Heart right ventricle (tissue), 16 donors: ENCODE measurements at regions of chr7 and their contacts with region 1.

Region 1: DNA sequence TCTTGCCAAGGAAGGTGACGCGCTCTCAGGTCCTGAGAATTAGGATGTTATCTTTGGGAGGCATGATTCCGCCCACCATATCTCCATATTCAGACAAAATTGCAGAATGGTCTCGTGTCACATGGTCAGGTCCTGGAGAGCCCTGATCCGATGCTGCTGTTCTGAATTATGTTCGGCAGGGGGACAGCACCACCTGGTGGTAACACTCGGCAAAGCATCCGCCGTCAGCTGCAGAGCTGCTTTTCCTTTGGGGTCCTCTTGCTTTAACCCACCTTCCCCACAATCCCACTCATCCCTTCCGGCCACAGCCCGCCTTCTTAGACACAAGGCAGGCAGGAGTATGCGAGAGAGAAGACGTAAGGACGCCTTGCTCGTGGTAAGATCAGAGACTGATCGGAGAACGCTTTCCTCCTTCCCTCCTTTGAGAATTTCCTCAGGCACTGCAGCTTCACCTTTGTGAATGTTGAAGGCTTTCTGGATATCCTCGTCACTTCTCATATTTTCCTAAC is 327.8 kb upstream of the C7orf33 start:
- DNase-seq: peak; percentile 49 to 66
- ATAC-seq: peak; percentile 53 to 88 (median 79)
- H3K4me3 ChIP-seq: peak overlapping the region in 2 of 10 donors; percentile 11 to 12
- H3K27ac ChIP-seq: no peak overlapping the region
- H3K4me1 ChIP-seq: peaks cover 0 to 8% (median 4%) of the 10 kb centered on the region in 9 donors
- H3K27me3 ChIP-seq: peaks cover 0 to 33% (median 8%) of the 10 kb centered on the region in 7 donors
- CTCF ChIP-seq: peak; percentile 80 to 98 (median 92)

Region 2: DNA sequence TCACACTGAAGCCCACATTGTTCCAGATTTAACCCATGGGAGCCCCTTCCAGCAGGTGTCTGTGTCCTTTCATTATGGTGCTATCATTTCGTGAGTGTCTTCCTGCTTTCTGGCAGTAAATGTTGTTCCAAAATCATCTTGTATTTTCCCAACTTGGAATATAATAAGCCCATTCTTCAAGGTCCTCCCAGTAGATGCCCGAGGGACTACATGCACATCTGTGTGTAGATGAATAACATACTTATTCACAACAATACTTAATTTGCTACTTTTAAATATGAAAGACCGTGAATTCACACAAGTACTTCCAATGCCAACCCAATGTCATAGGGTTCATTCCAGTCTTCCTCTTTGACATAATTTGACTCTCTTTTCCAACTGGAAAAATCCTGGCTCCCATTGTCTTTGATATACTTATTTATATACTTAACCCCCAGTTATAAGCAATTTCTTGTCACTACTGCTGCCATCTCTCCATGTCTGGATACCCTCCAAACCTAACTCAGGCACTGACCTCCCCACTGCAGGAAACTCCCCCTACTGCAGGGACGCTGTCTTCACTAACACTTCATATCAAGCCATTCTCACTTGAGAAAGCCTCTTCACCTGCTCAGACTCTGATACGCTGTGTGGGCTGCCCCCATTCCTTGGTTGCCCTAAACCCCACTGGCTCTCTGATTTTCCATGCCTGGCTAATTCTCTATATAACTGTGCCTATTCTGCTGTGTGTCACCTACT is 1027.0 kb before region 1 on chr7:
- intact Hi-C with region 1: loop called in 3 of 10 experiments (anchors 10 kb)
- DNase-seq: no peak
- ATAC-seq: no peak
- H3K4me3 ChIP-seq: no peak overlapping the region
- H3K27ac ChIP-seq: no peak overlapping the region
- H3K4me1 ChIP-seq: no peaks in the 10 kb centered on the region
- H3K27me3 ChIP-seq: no peaks in the 10 kb centered on the region
- CTCF ChIP-seq: no peak

Region 3: DNA sequence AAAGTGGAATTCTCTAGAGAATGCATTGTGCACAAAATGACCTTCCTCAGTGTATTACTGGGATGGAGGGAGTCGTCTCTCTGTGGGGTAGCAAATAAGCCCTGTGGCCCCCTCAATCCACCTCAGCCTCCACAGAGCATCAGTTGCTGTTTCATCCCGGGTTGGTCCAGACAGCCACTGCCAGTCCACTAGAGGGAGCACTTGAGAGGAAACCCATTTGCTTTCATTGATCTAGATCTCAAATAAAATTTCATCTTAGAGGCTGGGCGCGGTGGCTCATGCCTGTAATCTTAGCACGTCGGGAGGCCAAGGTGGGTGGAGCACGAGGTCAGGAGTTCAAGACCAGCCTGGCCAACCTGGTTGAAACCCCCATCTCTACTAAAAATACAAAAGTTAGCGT is 1017.5 kb before region 1 on chr7:
- intact Hi-C with region 1: loop called in 4 of 10 experiments (anchors 5 to 10 kb)
- DNase-seq: peak in 1 of 2 donors; percentile 5
- ATAC-seq: no peak
- H3K4me3 ChIP-seq: no peak overlapping the region
- H3K27ac ChIP-seq: no peak overlapping the region
- H3K4me1 ChIP-seq: no peaks in the 10 kb centered on the region
- H3K27me3 ChIP-seq: peaks cover 0 to 4% (median 0%) of the 10 kb centered on the region in 7 donors
- CTCF ChIP-seq: peak in 8 of 9 donors; percentile 25 to 70 (median 62)

Region 4: GRCh38 chr7:148318102-148318811 is 55.5 kb after region 1 on chr7:
- intact Hi-C with region 1: no loop called
- DNase-seq: no peak
- ATAC-seq: no peak
- H3K4me3 ChIP-seq: no peak overlapping the region
- H3K27ac ChIP-seq: no peak overlapping the region
- H3K4me1 ChIP-seq: no peaks in the 10 kb centered on the region
- H3K27me3 ChIP-seq: no peaks in the 10 kb centered on the region
- CTCF ChIP-seq: no peak

Region 5: DNA sequence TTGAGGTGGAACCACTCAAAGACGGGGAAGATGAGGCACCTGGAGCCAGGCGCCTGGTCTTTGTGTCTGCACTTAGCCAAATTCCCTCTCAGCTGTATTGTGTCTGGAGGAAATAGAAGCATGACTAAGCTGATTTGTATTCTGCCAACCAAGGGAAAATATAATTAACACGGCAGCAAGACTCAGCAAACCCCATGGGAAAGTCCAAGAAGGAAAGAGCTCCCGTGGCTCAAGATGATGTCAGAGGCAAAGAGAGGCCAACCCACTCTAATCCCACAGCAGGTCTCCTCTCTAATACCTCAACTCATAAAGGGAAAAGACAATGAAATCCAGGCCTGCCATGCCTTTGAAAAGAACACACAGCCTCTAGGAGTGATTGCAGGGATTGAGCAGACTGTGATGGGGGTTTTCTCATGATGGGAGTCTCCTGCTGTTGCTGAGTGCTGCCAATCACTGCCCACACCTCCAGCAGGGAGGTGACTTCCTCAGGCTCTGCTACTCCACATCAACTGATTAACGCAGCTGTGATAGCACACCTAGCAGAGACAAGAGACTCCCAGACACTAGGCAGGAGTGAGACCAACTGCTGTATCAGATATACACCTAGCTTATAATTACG is 72.3 kb after region 1 on chr7:
- intact Hi-C with region 1: no loop called
- DNase-seq: no peak
- ATAC-seq: peak; percentile 29 to 81 (median 50)
- H3K4me3 ChIP-seq: no peak overlapping the region
- H3K27ac ChIP-seq: no peak overlapping the region
- H3K4me1 ChIP-seq: peaks cover 0 to 22% (median 10%) of the 10 kb centered on the region in 9 donors
- H3K27me3 ChIP-seq: peaks cover 4 to 59% (median 47%) of the 10 kb centered on the region in 7 donors
- CTCF ChIP-seq: no peak

Region 6: GRCh38 chr7:148527707-148528168 is 265.0 kb after region 1 on chr7:
- intact Hi-C with region 1: loop called in 1 of 10 experiments (anchors 10 kb)
- DNase-seq: peak; percentile 50 to 76
- ATAC-seq: peak in 6 of 8 donors; percentile 52 to 70 (median 66)
- H3K4me3 ChIP-seq: no peak overlapping the region
- H3K27ac ChIP-seq: no peak overlapping the region
- H3K4me1 ChIP-seq: no peaks in the 10 kb centered on the region
- H3K27me3 ChIP-seq: peaks cover 0 to 34% (median 11%) of the 10 kb centered on the region in 7 donors
- CTCF ChIP-seq: peak in 8 of 9 donors; percentile 32 to 78 (median 70)